Sigmoid colon (tissue), 7 donors: ENCODE measurements at regions of chr9 and their contacts with region 1.

Region 1: DNA sequence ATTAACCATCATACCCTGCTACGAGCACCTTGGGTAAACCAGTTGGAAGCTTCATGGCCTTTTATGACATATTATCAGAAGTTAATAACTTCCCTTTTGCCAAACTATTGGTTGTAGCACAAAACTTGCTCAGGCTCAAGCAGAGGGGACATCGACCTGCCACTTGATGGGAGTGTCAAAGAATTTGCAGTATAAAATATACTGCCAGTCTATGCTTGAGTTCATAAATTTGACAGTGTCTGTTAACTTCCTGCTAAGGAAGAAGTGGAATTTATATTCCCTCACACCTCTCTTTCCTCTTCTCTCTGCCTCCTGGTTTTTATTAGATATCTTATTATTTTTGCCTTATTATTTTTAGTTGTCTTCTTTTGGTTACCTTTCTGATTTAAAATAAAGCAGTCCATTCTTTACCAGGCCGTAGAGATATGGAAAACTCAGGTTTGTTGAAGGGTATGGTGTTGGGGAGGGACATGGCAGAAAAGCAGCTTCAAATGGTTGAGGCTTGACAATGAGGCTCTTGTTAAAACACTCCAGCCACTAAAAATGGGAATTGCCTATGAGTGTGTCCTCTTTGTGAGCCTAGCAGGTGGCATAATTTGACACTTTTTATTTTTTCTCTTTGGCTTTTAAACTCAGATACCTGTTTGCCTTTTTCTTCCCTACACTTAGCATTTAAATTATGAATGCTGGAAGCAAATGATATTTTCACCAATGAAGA is 298.0 kb downstream of the DOCK8 start:
- DNase-seq: no peak
- H3K4me3 ChIP-seq: no peak overlapping the region
- H3K27ac ChIP-seq: no peak overlapping the region
- H3K4me1 ChIP-seq: peaks cover 0 to 5% (median 0%) of the 10 kb centered on the region in 4 donors
- H3K27me3 ChIP-seq: no peaks in the 10 kb centered on the region
- CTCF ChIP-seq: no peak
- EP300 ChIP-seq: no peak
- POLR2A ChIP-seq: no peak

Region 2: GRCh38 chr9:530681-531080 is 18.0 kb after region 1 on chr9:
- intact Hi-C with region 1: loop called (anchors 2 kb)
- DNase-seq: no peak
- H3K4me3 ChIP-seq: no peak overlapping the region
- H3K27ac ChIP-seq: peak overlapping the region in 3 of 4 donors; percentile 5 to 60 (median 54)
- H3K4me1 ChIP-seq: peaks cover 0 to 41% (median 23%) of the 10 kb centered on the region in 4 donors
- H3K27me3 ChIP-seq: no peaks in the 10 kb centered on the region
- CTCF ChIP-seq: no peak
- EP300 ChIP-seq: peak in 1 of 4 donors; percentile 23
- POLR2A ChIP-seq: no peak